A673 (cell line): ENCODE measurements at regions of chr9 and their contacts with region 1.

Region 1: DNA sequence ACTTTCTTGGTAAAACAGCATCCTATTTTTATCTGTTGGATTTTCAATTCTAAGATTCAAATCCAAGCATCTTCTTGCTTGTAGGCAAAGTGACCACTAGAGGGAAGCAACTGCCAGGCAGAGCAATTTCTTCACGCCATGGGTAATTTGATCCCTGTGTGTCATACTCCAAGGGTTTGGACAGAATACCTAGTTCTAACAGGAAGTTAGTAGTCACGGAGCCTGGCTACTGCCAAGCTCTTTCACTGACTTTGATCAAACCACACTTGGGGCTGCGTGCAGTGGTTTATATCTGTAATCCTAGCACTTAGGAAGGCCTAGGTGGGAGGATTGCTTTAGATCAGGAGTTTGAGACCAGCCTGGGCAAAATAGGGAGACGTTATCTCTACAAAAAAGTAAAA is 473.6 kb upstream of the TNC start:
- DNase-seq: peak; percentile 96
- H3K4me3 ChIP-seq: no peak overlapping the region
- H3K27ac ChIP-seq: peak overlapping the region; percentile 99
- H3K4me1 ChIP-seq: peaks cover 44% of the 10 kb centered on the region
- H3K27me3 ChIP-seq: no peaks in the 10 kb centered on the region
- CTCF ChIP-seq: peak; percentile 79

Region 2: DNA sequence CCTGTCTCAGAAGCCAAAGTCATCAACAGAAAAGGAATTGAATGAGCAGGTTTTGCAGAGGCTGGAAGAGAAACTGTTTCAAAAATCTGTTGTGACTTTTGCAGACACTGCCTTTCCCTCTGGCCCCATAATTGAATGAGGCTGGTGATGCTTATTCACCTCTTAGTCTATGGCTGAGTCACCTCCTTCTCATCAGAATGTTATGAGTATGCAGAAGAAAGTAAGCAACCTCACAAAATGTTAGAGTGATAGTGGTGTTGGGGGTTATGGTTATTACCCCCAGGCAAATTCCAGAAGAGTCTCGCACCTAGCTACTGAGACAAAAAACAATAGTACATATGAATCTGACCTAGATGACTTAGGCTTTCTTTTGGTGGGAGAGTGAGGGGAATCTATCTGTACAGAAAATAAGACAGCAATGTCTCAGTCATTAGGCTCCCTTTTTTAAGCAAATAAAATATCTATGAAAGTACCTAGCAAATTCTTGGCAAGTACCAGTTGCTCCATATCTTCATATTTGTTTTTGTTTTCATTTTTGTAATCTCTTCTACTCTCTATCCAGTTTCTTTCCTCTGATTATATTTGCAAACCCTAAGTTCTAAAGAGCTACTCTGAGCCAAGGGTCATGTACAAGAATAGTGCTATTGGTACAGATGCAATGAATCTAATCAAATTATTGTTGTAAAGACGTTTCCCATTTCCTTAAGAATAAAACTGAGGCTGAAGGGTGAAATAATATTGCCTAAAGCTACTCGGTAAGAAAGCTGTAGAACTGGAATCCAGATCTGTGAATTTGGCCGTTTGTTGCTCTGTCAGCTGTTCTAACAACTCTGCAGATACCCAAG is 24.5 kb after region 1 on chr9:
- CTCF ChIA-PET with region 1: interaction called, 14 read pairs
- POLR2A ChIA-PET with region 1: interaction called, 5 read pairs
- intact Hi-C with region 1: loop called (anchors 1 kb)
- DNase-seq: peak; percentile 55
- H3K4me3 ChIP-seq: no peak overlapping the region
- H3K27ac ChIP-seq: peak overlapping the region; percentile 98
- H3K4me1 ChIP-seq: peaks cover 54% of the 10 kb centered on the region
- H3K27me3 ChIP-seq: no peaks in the 10 kb centered on the region
- CTCF ChIP-seq: no peak

Region 3: DNA sequence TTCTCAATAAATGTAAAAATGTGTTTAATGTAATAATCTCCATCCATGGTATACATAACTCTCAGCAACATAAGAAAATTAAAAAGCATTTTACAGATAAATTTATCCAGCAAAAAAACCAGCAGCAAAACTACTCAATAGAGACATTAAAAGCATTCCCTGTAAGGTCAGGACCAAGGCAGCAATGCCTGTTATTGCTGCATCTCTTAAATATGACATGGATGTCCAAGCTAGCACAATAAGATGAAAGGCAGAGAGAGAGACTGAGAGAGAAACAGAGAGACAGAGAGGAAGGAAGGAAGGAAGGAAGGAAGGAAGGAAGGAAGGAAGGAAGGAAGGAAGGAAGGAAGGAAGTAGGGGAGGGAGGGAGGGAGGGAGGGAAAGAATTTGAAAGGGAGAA is 273.0 kb after region 1 on chr9:
- CTCF ChIA-PET with region 1: no interaction called
- POLR2A ChIA-PET with region 1: interaction called, 10 read pairs
- intact Hi-C with region 1: loop called (anchors 1 kb)
- DNase-seq: peak; percentile 96
- H3K4me3 ChIP-seq: no peak overlapping the region
- H3K27ac ChIP-seq: peak overlapping the region; percentile 99
- H3K4me1 ChIP-seq: peaks cover 61% of the 10 kb centered on the region
- H3K27me3 ChIP-seq: no peaks in the 10 kb centered on the region
- CTCF ChIP-seq: no peak

Region 4: GRCh38 chr9:116149844-116150243 is 558.3 kb after region 1 on chr9:
- CTCF ChIA-PET with region 1: interaction called, 3 read pairs
- POLR2A ChIA-PET with region 1: no interaction called
- intact Hi-C with region 1: loop called (anchors 5 kb)
- DNase-seq: peak; percentile 79
- H3K4me3 ChIP-seq: no peak overlapping the region
- H3K27ac ChIP-seq: peak overlapping the region; percentile 39
- H3K4me1 ChIP-seq: peaks cover 74% of the 10 kb centered on the region
- H3K27me3 ChIP-seq: no peaks in the 10 kb centered on the region
- CTCF ChIP-seq: peak; percentile 92

Region 5: GRCh38 chr9:116572095-116572748 is 980.6 kb after region 1 on chr9:
- CTCF ChIA-PET with region 1: interaction called, 8 read pairs
- POLR2A ChIA-PET with region 1: no interaction called
- intact Hi-C with region 1: loop called (anchors 1 kb)
- DNase-seq: peak; percentile 82
- H3K4me3 ChIP-seq: no peak overlapping the region
- H3K27ac ChIP-seq: peak overlapping the region; percentile 58
- H3K4me1 ChIP-seq: peaks cover 21% of the 10 kb centered on the region
- H3K27me3 ChIP-seq: no peaks in the 10 kb centered on the region
- CTCF ChIP-seq: peak; percentile 99

Region 6: GRCh38 chr9:116661037-116661954 is 1069.7 kb after region 1 on chr9:
- CTCF ChIA-PET with region 1: no interaction called
- POLR2A ChIA-PET with region 1: no interaction called
- intact Hi-C with region 1: loop called (anchors 1 kb)
- DNase-seq: peak; percentile 81
- H3K4me3 ChIP-seq: no peak overlapping the region
- H3K27ac ChIP-seq: no peak overlapping the region
- H3K4me1 ChIP-seq: peaks cover 22% of the 10 kb centered on the region
- H3K27me3 ChIP-seq: no peaks in the 10 kb centered on the region
- CTCF ChIP-seq: peak; percentile 86